WTC11 (cell line): ENCODE measurements at regions of chr9 and their contacts with region 1.

Region 1: GRCh38 chr9:26892251-26893029 is at the start of gene CAAP1:
- DNase-seq: peak; percentile 92
- ATAC-seq: peak; percentile 91
- H3K4me3 Mint-ChIP-seq: peak within 1 kb of the TSS; percentile 99
- H3K27ac Mint-ChIP-seq: peak within 1 kb of the TSS; percentile 100
- H3K4me1 Mint-ChIP-seq: peaks cover 19% of the 10 kb centered on the region
- H3K27me3 Mint-ChIP-seq: no peaks in the 10 kb centered on the region
- CTCF ChIP-seq: no peak
- total RNA-seq, gene CAAP1: 33.2 to 45.4 TPM (median 36.1 TPM) in 3 replicates

Region 2: GRCh38 chr9:26955921-26956859 is 63.8 kb after region 1 on chr9 and contains the start of gene IFT74:
- CTCF ChIA-PET with region 1: interaction called, 11 read pairs
- POLR2A ChIA-PET with region 1: interaction called, 9 read pairs
- DNase-seq: peak; percentile 90
- ATAC-seq: peak; percentile 98
- H3K4me3 Mint-ChIP-seq: peak within 1 kb of the TSS; percentile 90
- H3K27ac Mint-ChIP-seq: peak within 1 kb of the TSS; percentile 93
- H3K4me1 Mint-ChIP-seq: peaks cover 14% of the 10 kb centered on the region
- H3K27me3 Mint-ChIP-seq: no peaks in the 10 kb centered on the region; the same call in 1 of the 2 replicates
- CTCF ChIP-seq: no peak
- total RNA-seq, gene IFT74: 15.2 to 21.6 TPM (median 17.3 TPM) in 3 replicates